ENCODE measurements at regions of chr21 and their contacts with region 1.

Region 1: GRCh38 chr21:38494703-38495102 is 3.6 kb downstream of the ERG start:
- DNase-seq: peak in 2 of 3 donors; percentile 53
- H3K4me3 ChIP-seq: peak overlapping the region; percentile 44 to 91 (median 86)
- H3K27ac ChIP-seq: peak overlapping the region; percentile 88 to 93
- H3K4me1 ChIP-seq: peaks cover 40 to 78% (median 60%) of the 10 kb centered on the region in 4 experiments
- H3K27me3 ChIP-seq: no peaks in the 10 kb centered on the region

Region 2: GRCh38 chr21:38478782-38479181 is 15.9 kb before region 1 on chr21:
- CTCF ChIA-PET with region 1: interaction called, 10 read pairs
- POLR2A ChIA-PET with region 1: interaction called, 41 read pairs
- DNase-seq: peak; percentile 52 to 78 (median 66)
- H3K4me3 ChIP-seq: peak overlapping the region in 2 of 7 experiments; percentile 4 to 25
- H3K27ac ChIP-seq: peak overlapping the region; percentile 98
- H3K4me1 ChIP-seq: peaks cover 53 to 95% (median 86%) of the 10 kb centered on the region in 4 experiments
- H3K27me3 ChIP-seq: no peaks in the 10 kb centered on the region

Region 3: DNA sequence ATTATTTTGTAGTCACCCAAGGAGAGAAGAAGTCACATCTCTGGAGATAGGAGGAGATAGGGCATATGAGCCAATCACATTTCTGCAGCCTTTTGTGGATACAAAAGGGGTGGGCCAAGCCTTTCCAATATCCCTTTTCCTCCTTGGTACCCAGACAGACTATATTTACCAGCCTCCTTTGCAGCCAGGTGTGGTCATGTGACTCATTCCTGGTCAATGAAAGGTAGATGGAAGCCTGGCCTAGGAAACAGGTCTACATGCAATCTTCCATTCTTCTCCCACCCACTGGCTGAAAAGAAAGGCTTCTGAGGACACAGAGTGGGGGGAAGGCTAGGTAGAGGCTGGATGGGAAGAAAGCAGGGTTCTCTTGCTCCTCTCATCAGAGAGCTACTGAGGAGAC is 61.7 kb after region 1 on chr21:
- CTCF ChIA-PET with region 1: no interaction called
- POLR2A ChIA-PET with region 1: no interaction called
- DNase-seq: no peak
- H3K4me3 ChIP-seq: no peak overlapping the region
- H3K27ac ChIP-seq: no peak overlapping the region
- H3K4me1 ChIP-seq: no peaks in the 10 kb centered on the region
- H3K27me3 ChIP-seq: no peaks in the 10 kb centered on the region

Region 4: DNA sequence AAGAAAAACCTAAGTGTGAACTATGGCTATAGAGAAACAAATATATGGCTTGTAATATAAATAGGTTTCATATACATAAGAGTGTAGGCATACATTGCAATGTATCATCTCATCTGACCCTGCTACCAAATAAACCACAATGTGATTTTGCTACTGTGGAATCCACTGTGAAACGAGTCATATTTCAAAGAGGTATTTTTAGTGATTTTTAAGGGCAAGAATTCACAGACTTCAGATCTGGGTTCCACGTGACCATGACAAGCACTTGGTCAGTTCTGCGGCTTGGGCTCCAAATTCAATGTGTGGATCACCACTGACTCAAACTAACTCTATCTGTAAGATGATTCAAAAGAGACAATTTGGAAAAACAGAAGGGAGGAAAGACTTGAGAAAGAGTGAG is 150.6 kb after region 1 on chr21:
- CTCF ChIA-PET with region 1: no interaction called
- POLR2A ChIA-PET with region 1: no interaction called
- DNase-seq: no peak
- H3K4me3 ChIP-seq: no peak overlapping the region
- H3K27ac ChIP-seq: no peak overlapping the region
- H3K4me1 ChIP-seq: no peaks in the 10 kb centered on the region
- H3K27me3 ChIP-seq: peaks cover 0 to 2% (median 0%) of the 10 kb centered on the region in 5 experiments

Measured in common myeloid progenitor, CD34-positive (primary cell).